ENCODE measurements at regions of chr11 and their contacts with region 1.

Region 1: GRCh38 chr11:57249384-57250319 is 12.6 kb upstream of the APLNR start:
- DNase-seq: no peak
- H3K4me3 Mint-ChIP-seq: no peak overlapping the region
- H3K27ac Mint-ChIP-seq: no peak overlapping the region
- H3K4me1 Mint-ChIP-seq: peaks cover 7% of the 10 kb centered on the region
- H3K27me3 Mint-ChIP-seq: peaks cover 18% of the 10 kb centered on the region

Region 2: DNA sequence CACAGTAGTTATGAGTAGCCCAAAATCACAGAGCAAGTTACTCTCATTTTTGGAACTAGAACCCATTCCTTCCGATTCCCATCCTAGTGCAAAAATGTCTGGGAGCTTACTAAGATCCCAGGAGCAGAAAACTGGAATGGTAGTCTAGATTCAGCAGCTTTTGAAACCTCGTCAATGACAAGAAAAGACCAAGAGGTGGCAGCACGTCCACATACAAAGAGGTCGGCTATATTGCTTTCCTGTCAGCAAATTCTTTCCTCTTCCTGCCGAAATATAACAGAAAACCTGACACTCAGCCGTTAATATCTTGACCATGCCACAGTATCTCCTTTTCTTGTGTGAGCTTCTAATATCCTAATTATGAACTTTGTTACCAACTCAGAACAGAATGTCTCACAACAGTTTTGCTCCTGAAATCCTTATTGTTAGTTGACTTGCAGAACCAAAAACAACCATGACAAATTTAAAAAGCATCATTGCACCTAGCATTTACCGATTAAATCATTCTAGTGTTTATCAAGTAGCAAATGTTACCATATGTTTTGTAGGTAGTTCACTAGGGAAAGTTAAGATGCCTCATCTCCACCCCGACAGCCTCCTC is 408.3 kb before region 1 on chr11:
- intact Hi-C with region 1: loop called (anchors 1 kb)
- DNase-seq: no peak
- H3K4me3 Mint-ChIP-seq: no peak overlapping the region
- H3K27ac Mint-ChIP-seq: no peak overlapping the region
- H3K4me1 Mint-ChIP-seq: no peaks in the 10 kb centered on the region
- H3K27me3 Mint-ChIP-seq: no peaks in the 10 kb centered on the region

Region 3: DNA sequence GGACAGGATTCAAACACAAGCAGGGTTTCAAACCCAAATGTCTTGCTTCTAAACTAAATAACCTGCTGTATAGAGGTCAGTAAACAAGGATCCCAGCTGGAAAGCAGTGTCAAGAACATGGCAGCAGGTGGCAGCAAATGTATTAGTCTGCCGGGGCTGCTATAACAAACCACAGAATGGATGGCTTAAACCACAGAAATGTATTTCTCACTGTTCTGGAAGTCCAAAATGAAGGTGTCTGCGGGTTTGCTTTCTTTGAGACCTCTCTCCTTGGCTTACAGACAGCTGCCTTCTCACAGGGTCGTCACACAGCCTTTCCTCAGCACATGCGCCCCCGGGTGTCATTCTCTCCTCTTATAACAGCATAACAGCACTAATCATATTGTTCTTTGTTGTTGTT is 133.0 kb before region 1 on chr11:
- intact Hi-C with region 1: loop called (anchors 1 kb)
- DNase-seq: no peak
- H3K4me3 Mint-ChIP-seq: no peak overlapping the region
- H3K27ac Mint-ChIP-seq: no peak overlapping the region
- H3K4me1 Mint-ChIP-seq: no peaks in the 10 kb centered on the region
- H3K27me3 Mint-ChIP-seq: peaks cover 1% of the 10 kb centered on the region

Region 4: GRCh38 chr11:57536947-57537619 is 287.4 kb after region 1 on chr11 and contains the start of gene SMTNL1:
- intact Hi-C with region 1: no loop called
- DNase-seq: no peak
- H3K4me3 Mint-ChIP-seq: no peak within 1 kb of the TSS
- H3K27ac Mint-ChIP-seq: no peak within 1 kb of the TSS
- H3K4me1 Mint-ChIP-seq: peaks cover under 1% of the 10 kb centered on the region
- H3K27me3 Mint-ChIP-seq: no peaks in the 10 kb centered on the region
- total RNA-seq, gene SMTNL1: not detected in 2 replicates